Posterior vena cava (tissue), 2 donors: ENCODE measurements at regions of chr3 and their contacts with region 1.

Region 1: GRCh38 chr3:120498556-120499346 is 48.0 kb upstream of the FSTL1 start:
- DNase-seq: no peak

Region 2: DNA sequence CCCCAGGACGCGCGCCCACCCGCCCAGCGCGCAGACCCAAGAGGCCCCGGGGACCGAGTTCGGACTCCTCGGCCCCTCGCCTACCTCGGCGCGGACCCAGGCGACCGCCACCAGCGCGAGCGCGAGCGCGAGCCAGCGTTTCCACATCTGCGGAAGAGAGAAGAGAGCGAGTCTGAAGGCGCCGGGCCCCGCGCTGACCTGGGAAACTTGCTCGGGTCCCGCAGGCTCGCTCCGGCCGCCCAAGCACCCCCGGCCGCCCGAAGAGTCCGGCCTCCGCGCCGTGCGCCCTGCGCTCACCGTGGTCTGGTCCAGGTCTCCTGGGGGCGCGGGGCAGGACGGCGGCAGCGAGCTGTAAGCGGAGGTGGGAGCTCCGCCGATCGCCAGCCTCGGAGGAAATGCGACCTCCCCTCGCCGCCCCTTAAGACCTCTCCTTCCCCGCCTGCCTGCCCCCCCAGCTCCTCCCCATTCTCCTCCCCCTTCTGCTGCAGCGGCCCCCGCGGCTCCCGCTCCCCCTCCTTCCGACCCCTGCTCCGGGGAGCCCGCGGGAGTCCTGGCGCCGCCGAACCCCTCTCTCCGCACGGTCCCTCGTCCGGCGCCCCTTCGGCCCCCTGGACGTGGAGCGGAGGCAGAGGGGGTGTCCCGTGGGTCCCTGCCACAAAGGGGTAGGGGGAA is 48.0 kb before region 1 on chr3 and contains the start of gene FSTL1:
- intact Hi-C with region 1: loop called in 1 of 2 experiments (anchors 5 kb)
- DNase-seq: peak; percentile 90
- total RNA-seq, gene FSTL1: 548 to 1,310 TPM

Region 3: GRCh38 chr3:120536642-120537041 is 37.9 kb after region 1 on chr3:
- intact Hi-C with region 1: no loop called
- DNase-seq: no peak

Region 4: DNA sequence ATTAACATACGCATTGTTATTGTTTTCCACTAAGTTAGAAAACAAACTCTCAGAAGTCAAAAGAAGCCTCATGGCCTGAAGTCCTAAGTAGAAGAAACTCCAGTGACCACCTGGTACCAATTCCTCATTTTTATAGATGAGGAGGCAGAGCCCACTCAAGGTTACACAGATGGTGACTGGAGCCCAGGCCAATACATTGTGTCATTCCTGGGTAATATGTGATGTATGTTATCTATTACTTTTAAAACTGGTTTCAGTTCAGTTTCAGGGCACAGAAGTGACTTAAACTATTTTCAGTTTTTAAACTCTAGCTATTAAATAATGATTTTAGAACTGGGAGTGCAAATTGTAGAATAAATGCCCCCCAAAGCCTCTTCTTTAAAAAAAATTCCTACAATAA is 342.5 kb after region 1 on chr3:
- intact Hi-C with region 1: no loop called
- DNase-seq: no peak